Lower leg skin (tissue), 4 donors: ENCODE measurements at regions of chr7 and their contacts with region 1.

Region 1: DNA sequence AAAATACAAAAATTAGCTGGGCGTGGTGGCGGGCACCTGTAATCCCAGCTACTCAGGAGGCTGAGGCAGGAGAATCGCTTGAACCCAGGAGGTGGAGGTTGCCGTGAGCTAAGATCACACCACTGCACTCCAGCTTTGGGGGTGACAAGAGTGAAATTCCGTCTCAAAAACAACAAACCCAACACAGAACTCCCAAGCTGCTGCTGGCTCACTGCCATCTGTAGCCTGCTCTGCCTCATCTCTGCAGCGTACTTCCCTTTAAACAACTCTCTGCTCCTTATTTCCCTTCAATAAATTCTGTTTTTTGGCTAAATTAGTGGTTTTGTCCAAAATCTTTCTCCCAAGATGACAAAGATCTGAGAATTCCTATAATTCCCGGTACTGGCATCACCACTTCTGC is 189.2 kb upstream of the GALNT17 start:
- DNase-seq: peak in 1 of 2 donors; percentile 25
- H3K4me3 ChIP-seq: no peak overlapping the region
- CTCF ChIP-seq: no peak
- POLR2A ChIP-seq: no peak

Region 2: DNA sequence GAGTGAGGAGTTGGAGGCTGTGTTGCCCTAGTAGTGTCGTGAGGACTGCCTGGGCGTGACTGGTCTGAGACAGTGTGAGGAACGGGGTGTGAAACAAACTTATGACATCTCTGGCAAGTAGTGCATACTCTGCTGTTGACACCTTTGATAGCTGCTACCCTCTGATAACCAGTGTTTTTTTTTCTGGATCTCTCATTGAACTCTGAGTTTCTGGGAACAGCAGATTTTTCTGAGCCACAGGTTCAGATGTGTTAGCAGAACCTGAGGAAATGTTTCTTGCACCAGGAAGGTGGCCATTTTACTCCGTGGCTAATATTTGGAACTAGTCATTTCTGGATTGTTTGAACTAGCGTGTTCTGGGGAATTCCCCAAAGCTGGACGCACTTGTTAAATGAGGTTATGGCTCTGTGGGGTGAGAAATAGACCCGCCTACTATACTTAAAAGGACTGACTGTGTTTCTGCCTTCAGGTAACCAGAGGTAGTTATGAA is 1291.6 kb before region 1 on chr7:
- intact Hi-C with region 1: loop called (anchors 10 kb)
- DNase-seq: no peak
- H3K4me3 ChIP-seq: no peak overlapping the region
- CTCF ChIP-seq: no peak
- POLR2A ChIP-seq: no peak

Region 3: DNA sequence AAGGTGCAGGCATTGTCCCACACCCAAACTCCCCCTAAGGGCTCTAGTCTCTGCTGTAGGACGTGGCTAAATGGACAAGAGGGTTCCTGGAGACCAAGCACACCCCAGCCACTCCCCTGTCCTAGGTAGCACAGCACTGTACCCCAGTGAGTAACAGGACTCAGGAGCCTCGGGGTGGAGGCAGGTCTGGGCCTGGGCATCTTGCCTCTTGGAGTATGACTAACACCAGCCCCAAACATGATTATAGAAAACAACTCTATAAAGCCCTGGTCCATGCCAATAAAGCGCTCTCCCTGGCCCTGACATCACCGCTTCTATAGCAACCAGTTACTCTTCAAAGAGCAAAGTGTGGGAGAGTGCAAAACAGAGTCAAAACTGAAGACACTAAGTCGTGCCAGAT is 1274.4 kb after region 1 on chr7:
- intact Hi-C with region 1: no loop called
- DNase-seq: peak; percentile 66 to 82
- H3K4me3 ChIP-seq: no peak overlapping the region
- CTCF ChIP-seq: no peak
- POLR2A ChIP-seq: no peak